K562 (cell line): ENCODE measurements at regions of chr2 and their contacts with region 1.

Region 1: DNA sequence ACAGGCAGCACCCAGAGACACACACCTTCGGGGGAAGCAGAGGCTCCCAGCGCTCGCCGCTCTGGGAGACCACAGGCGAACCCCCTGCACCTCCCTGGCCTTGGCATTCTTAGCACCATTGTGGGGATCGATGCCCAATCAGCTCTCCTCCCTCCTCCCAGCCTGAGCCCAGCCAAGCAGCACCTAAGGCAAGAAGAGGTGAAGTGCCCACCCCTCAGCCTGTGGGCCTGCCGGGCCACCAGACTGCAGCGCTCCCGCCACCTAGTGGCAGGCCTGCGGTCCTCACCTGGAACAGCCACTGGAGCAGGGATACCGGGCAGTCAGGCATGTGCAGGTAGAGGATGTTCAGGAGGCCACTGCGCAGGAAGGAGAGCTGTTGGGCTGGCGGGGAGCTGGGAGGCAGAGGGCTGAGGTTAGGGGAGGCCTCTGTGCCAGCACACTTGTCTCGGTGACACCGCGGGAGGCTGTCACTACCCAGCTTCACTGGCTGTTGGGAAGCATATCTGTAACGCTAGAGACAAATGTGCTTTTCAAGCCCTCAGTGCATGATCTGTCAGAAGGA is 35.2 kb downstream of the FAM178B start:
- DNase-seq: peak; percentile 86 to 90 (median 87)
- ATAC-seq: peak; percentile 98
- H3K4me3 ChIP-seq: no peak overlapping the region
- H3K27ac ChIP-seq: no peak overlapping the region
- H3K4me1 ChIP-seq: peaks cover 46 to 57% of the 10 kb centered on the region in 2 experiments; a peak in 4 of 5 replicates
- H3K27me3 ChIP-seq: no peaks in the 10 kb centered on the region
- CTCF ChIP-seq: peak; percentile 91 to 96 (median 94)
- EP300 ChIP-seq: no peak
- POLR2A ChIP-seq: no peak
- RAD21 ChIP-seq: peak; percentile 95 to 98

Region 2: DNA sequence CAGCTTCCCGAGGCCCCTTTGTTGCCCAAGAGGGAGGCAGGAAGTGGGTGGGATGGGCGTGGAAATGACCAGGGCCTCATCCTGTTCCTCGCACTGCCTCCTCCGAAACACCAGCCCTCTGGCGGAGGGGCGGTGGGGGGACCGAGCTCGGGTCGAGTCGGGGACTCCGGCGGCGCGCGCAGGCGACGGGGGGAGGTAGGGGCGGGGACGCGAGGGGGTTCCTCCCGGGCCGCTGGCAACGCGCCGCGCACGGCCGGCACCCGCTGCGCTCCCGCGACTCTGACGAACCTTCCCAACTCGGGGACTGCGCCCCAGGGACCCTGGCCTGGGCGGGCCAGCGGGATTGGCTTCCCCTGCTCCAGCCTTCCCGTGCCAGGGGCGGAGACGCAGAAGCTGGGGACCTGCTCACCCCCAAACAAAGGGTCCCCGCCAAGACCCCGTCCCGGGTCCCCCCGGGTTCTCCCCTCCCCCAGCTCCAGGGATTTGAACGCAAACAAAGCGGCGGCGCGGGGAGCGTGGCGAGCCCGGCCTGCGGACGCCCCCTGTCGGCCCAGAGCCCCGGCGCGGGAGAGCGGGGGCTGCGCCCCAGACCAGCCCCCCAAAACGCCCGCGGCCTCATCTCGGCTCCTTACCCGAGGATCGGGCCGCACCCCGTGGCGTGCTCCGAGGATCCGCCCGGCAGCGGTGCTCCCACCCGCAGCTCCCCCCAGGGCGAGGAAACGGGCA is 82.5 kb before region 1 on chr2:
- CTCF ChIA-PET with region 1: interaction called, 3 read pairs
- POLR2A ChIA-PET with region 1: interaction called, 17 read pairs
- in situ Hi-C with region 1: no loop called
- intact Hi-C with region 1: loop called (anchors 5 kb)
- DNase-seq: peak; percentile 88 to 94 (median 90)
- ATAC-seq: peak; percentile 78
- H3K4me3 ChIP-seq: peak overlapping the region; percentile 97
- H3K27ac ChIP-seq: peak overlapping the region; percentile 95
- H3K4me1 ChIP-seq: peaks cover 27 to 89% of the 10 kb centered on the region in 2 experiments
- H3K27me3 ChIP-seq: no peaks in the 10 kb centered on the region
- CTCF ChIP-seq: peak; percentile 59 to 72 (median 62); a peak in 5 of 6 replicates
- EP300 ChIP-seq: no peak
- POLR2A ChIP-seq: peak; percentile 61; the same call in 1 of the 2 replicates
- RAD21 ChIP-seq: peak in 1 of 2 experiments; percentile 34; a peak in 2 of 4 replicates

Region 3: DNA sequence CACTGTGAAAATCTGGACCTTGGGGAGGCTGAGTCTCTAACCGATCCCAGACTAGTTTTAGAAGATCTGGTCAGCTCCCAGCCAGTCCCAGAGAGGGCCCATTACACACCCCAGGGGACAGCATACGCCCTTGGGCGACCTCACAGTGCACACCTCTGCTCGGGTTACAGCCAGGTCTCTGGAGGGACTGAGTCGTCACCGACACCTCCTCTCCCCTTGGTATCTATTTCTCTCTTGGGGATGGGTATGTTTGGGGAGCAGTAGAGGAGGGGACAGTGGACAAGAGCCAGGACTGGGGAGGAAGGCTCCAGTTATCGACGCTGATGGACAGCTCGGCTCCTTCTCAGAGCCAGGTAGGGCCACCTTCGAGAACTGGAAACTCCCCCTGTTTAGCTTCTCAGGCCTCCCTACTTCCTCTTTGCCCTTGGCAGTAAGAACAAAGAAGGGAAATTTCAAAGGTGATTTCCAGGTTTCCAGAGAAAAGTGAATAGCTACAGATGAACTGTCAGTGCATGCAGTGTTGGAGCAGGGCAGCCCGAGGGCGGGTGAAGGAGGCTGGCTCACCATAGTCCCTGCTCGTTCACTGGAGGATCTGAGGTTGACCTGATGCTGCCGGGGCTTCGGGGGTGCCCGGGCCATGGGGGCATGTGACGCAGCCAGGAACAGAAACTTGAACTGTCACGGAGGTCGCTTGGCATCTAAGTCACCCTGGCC is 76.9 kb before region 1 on chr2:
- CTCF ChIA-PET with region 1: interaction called, 3 read pairs
- POLR2A ChIA-PET with region 1: interaction called, 17 read pairs
- in situ Hi-C with region 1: no loop called
- intact Hi-C with region 1: loop called (anchors 5 kb)
- DNase-seq: peak in 2 of 4 experiments; percentile 38 to 43
- ATAC-seq: peak; percentile 22
- H3K4me3 ChIP-seq: no peak overlapping the region
- H3K27ac ChIP-seq: peak overlapping the region; percentile 53; the same call in 2 of the 3 replicates
- H3K4me1 ChIP-seq: peaks cover 43 to 91% of the 10 kb centered on the region in 2 experiments
- H3K27me3 ChIP-seq: no peaks in the 10 kb centered on the region
- CTCF ChIP-seq: no peak
- EP300 ChIP-seq: no peak
- POLR2A ChIP-seq: no peak
- RAD21 ChIP-seq: no peak